ENCODE measurements at regions of chr12 and their contacts with region 1.

Region 1: DNA sequence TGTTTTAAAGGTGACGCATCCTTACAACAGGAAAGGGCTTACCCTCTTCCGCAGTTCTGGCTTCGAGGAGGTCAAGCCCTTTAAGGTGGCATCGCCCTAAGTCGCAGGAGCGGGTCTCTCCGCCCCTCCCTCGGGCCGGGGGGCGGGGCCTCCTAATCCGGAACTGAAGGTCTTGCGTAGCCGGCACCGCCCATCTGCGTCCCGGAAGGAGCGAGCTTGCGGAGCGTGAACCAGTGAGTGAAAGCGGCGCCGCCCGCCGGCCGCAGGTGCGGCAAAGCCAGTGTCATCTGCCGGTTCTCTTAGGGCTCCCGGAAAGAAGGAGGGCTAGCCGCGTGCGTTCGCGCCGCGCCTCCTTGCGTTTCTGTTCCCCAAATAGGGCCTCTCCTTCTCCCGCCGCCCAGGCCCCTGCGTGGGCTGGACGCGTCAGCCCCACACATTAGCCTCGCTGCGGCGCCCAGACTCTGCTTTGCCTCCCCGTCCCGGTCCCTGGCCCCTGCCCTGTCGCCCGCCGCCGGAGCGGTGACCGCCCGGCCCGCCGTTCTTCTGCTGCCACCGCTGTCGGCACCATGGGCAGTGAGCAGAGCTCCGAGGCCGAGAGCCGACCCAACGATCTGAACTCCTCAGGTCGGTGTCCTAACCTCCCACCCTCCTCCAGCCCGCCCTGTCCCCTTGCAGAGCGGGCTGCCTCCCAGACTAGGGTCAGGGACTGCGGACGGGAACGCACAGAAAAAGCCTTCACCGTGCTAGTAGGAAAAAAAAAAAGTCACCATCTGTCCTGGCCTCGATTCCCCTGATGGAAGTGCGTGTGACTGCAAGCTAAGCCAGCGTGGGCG is at the start of gene BORCS5:
- DNase-seq: peak; percentile 96 to 99 (median 98)
- ATAC-seq: peak; percentile 85
- H3K4me3 ChIP-seq: peak within 1 kb of the TSS; percentile 87
- H3K4me3 Mint-ChIP-seq: peak within 1 kb of the TSS; percentile 94
- H3K27ac ChIP-seq: peak within 1 kb of the TSS; percentile 86 to 93
- H3K27ac Mint-ChIP-seq: peak within 1 kb of the TSS; percentile 97
- H3K4me1 ChIP-seq: peaks cover 41% of the 10 kb centered on the region
- H3K4me1 Mint-ChIP-seq: peaks cover 64% of the 10 kb centered on the region
- H3K27me3 ChIP-seq: no peaks in the 10 kb centered on the region
- H3K27me3 Mint-ChIP-seq: no peaks in the 10 kb centered on the region
- CTCF ChIP-seq: peak; percentile 30
- total RNA-seq, gene BORCS5: 36.4 to 39.3 TPM

Region 2: DNA sequence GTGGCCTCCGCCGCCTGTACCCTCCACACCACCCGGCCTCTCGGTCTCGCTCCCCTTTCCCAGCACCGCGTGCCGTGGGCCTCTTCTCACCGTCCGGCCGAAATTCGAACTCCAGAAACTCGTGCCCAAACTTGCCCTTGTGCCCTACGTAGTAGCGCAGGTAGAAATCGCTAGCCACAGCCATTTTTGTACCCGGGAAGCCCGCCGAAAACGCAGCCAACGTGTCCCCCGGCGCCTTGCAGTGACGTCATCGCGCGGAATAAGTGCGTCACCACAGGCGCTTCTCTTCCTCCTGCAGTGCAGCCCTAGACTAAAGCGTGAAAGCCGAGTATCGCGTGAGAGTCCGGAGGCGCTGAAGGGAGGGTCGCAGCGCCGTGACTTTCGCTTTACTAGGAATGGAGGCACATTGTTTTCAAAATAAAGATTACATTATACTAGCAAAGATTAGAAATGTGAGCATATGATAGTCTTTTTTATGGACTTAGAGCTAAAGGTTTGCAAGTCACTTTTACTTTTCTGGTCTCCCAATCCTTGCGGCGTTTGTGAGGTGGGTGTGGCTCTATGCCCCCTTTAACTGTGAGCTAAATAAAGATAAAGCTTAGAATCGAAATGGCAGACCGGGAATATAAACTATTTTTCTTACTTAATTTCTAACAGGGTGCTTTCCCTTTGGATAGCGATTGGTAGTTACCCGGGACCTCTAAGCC is 1743.6 kb before region 1 on chr12 and contains the start of gene MAGOHB:
- CTCF ChIA-PET with region 1: no interaction called
- POLR2A ChIA-PET with region 1: interaction called, 3 read pairs
- intact Hi-C with region 1: loop called in 1 of 2 experiments (anchors 10 kb)
- DNase-seq: peak; percentile 95 to 100 (median 98)
- ATAC-seq: peak; percentile 91
- H3K4me3 ChIP-seq: peak within 1 kb of the TSS; percentile 94
- H3K4me3 Mint-ChIP-seq: peak within 1 kb of the TSS; percentile 99
- H3K27ac ChIP-seq: peak within 1 kb of the TSS; percentile 93 to 95
- H3K27ac Mint-ChIP-seq: peak within 1 kb of the TSS; percentile 99
- H3K4me1 ChIP-seq: peaks cover 11% of the 10 kb centered on the region
- H3K4me1 Mint-ChIP-seq: peaks cover 26% of the 10 kb centered on the region
- H3K27me3 ChIP-seq: no peaks in the 10 kb centered on the region
- H3K27me3 Mint-ChIP-seq: peaks cover 17% of the 10 kb centered on the region
- CTCF ChIP-seq: no peak
- total RNA-seq, gene MAGOHB: 7.5 to 7.7 TPM

Region 3: DNA sequence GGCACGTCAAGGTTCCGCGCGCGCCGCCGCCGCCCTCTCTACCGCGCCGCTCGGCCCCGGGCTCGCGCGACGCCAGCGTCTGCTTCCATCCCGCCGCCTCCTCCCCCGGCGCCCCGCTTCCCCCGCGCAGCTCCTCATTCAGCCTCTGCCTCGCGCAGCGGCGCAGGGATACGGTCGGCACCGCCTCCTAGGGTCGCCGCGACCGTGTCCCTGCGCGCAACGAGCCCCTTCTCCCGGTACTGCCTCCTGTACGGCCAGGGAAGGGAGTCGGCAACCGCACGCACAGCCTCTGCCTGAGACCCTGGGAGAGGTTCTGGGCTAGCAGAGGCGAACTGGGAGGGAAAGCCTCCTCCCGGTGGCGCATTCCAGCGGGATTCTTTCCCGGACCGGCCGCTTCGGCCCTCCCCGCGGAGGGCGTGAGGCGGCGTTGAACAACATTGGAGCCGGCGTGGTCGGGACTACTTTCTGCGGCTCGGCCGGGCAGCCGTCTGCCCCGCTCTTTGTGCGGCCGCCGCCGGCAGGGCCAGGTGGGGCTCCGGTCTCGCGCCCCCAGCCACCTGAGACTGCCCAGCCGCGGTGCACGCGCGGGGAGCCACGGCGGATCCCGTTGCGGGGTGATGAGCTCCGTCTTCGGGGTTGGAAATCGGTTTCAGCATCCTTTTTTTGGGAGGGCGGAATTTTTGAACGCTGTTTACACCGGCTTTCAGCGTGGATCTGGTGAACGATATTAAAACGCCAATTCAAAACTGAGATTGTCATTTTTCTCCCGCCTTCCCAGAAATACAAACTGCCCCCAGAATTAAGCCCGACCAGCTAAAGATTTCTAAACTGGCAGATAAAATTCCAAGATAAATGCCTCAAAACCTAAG is 90.0 kb before region 1 on chr12 and contains the start of gene LRP6:
- CTCF ChIA-PET with region 1: no interaction called
- POLR2A ChIA-PET with region 1: interaction called, 15 read pairs
- intact Hi-C with region 1: loop called in 1 of 2 experiments (anchors 5 kb)
- DNase-seq: peak; percentile 52 to 86 (median 70)
- ATAC-seq: peak; percentile 93
- H3K4me3 ChIP-seq: peak within 1 kb of the TSS; percentile 66
- H3K4me3 Mint-ChIP-seq: peak within 1 kb of the TSS; percentile 91
- H3K27ac ChIP-seq: no peak within 1 kb of the TSS
- H3K27ac Mint-ChIP-seq: peak within 1 kb of the TSS; percentile 18
- H3K4me1 ChIP-seq: peaks cover 16% of the 10 kb centered on the region
- H3K4me1 Mint-ChIP-seq: peaks cover 28% of the 10 kb centered on the region
- H3K27me3 ChIP-seq: peaks cover 0 to 14% of the 10 kb centered on the region in 2 experiments
- H3K27me3 Mint-ChIP-seq: peaks cover 6% of the 10 kb centered on the region
- CTCF ChIP-seq: no peak
- total RNA-seq, gene LRP6: 5.2 to 6.8 TPM

Region 4: GRCh38 chr12:12387501-12387900 is 30.4 kb after region 1 on chr12:
- CTCF ChIA-PET with region 1: no interaction called
- POLR2A ChIA-PET with region 1: no interaction called
- intact Hi-C with region 1: no loop called
- DNase-seq: peak in 3 of 14 experiments; percentile 27 to 39 (median 35)
- ATAC-seq: no peak
- H3K4me3 ChIP-seq: no peak overlapping the region
- H3K4me3 Mint-ChIP-seq: no peak overlapping the region
- H3K27ac ChIP-seq: no peak overlapping the region
- H3K27ac Mint-ChIP-seq: peak overlapping the region; percentile 62
- H3K4me1 ChIP-seq: peaks cover 10% of the 10 kb centered on the region
- H3K4me1 Mint-ChIP-seq: peaks cover 48% of the 10 kb centered on the region
- H3K27me3 ChIP-seq: no peaks in the 10 kb centered on the region
- H3K27me3 Mint-ChIP-seq: no peaks in the 10 kb centered on the region
- CTCF ChIP-seq: no peak

Region 5: DNA sequence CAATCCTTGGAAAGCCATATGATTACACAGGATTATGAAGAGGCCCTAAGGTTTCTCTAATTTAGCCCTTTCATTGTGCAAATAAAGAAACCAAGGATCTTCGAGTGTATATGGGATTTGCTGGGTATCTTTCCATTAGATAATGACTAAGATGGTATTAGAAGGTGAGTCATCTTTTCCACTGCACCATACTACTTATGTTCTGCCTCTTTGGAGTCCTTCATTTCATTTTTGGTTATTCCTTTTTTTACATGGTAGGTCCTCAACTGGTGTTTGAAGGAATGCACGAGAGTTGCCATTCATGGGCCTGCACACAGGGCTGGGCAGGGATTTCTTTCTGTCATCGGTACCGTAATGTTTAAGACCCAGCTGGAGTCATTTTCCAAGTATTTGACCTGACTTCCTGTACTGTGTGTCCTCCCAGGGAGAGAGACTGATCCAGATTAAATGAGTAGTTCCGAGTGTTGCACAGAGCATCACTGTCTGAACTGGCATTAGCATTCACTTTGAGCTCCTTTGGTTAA is 85.5 kb after region 1 on chr12:
- CTCF ChIA-PET with region 1: no interaction called
- POLR2A ChIA-PET with region 1: interaction called, 17 read pairs
- intact Hi-C with region 1: no loop called
- DNase-seq: peak in 3 of 14 experiments; percentile 47 to 52 (median 52)
- ATAC-seq: peak; percentile 1
- H3K4me3 ChIP-seq: no peak overlapping the region
- H3K4me3 Mint-ChIP-seq: peak overlapping the region; percentile 45
- H3K27ac ChIP-seq: peak overlapping the region; percentile 83
- H3K27ac Mint-ChIP-seq: peak overlapping the region; percentile 95
- H3K4me1 ChIP-seq: peaks cover 74% of the 10 kb centered on the region
- H3K4me1 Mint-ChIP-seq: peaks cover 81% of the 10 kb centered on the region
- H3K27me3 ChIP-seq: no peaks in the 10 kb centered on the region
- H3K27me3 Mint-ChIP-seq: no peaks in the 10 kb centered on the region
- CTCF ChIP-seq: no peak

Region 6: DNA sequence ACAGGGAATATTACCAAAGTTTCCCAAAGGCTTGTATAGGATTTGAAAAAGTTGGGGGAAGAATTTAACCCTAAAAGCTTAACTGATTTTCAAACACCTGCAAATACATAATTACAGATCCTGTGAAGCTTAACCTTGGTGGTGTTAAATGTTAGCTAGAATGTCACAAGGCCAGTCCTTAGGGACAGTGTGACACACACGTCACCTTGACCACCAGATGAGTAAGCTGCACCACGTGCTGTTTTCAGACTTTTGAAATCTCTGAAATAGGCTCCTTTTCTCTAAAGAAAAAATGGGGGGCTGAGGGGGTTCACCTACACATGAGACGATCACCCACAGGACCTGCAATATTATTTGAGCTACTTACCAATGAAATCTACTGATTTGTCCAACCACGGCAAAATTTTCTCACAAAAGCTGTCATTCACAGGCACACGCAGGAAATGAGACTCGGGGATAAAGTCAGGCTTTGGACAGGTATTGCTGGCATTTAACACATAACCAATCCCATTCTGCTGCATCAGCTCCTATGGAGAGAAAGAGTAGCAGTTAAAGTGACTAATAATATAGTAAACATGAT is 129.6 kb after region 1 on chr12:
- CTCF ChIA-PET with region 1: no interaction called
- POLR2A ChIA-PET with region 1: interaction called, 36 read pairs
- intact Hi-C with region 1: no loop called
- DNase-seq: no peak
- ATAC-seq: no peak
- H3K4me3 ChIP-seq: no peak overlapping the region
- H3K4me3 Mint-ChIP-seq: no peak overlapping the region
- H3K27ac ChIP-seq: peak overlapping the region in 1 of 2 donors; percentile 56
- H3K27ac Mint-ChIP-seq: peak overlapping the region; percentile 73
- H3K4me1 ChIP-seq: peaks cover 37% of the 10 kb centered on the region
- H3K4me1 Mint-ChIP-seq: peaks cover 51% of the 10 kb centered on the region
- H3K27me3 ChIP-seq: no peaks in the 10 kb centered on the region
- H3K27me3 Mint-ChIP-seq: no peaks in the 10 kb centered on the region
- CTCF ChIP-seq: no peak

Region 7: DNA sequence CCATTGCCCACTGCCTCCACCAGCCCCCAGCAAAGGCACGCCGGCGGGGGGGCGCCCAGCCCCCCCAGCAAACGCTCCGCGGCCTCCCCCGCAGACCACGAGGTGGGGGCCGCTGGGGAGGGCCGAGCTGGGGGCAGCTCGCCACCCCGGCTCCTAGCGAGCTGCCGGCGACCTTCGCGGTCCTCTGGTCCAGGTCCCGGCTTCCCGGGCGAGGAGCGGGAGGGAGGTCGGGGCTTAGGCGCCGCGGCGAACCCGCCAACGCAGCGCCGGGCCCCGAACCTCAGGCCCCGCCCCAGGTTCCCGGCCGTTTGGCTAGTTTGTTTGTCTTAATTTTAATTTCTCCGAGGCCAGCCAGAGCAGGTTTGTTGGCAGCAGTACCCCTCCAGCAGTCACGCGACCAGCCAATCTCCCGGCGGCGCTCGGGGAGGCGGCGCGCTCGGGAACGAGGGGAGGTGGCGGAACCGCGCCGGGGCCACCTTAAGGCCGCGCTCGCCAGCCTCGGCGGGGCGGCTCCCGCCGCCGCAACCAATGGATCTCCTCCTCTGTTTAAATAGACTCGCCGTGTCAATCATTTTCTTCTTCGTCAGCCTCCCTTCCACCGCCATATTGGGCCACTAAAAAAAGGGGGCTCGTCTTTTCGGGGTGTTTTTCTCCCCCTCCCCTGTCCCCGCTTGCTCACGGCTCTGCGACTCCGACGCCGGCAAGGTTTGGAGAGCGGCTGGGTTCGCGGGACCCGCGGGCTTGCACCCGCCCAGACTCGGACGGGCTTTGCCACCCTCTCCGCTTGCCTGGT is 359.9 kb after region 1 on chr12 and contains the start of gene CDKN1B:
- CTCF ChIA-PET with region 1: interaction called, 8 read pairs
- POLR2A ChIA-PET with region 1: interaction called, 175 read pairs
- intact Hi-C with region 1: no loop called
- DNase-seq: peak; percentile 75 to 95 (median 84)
- ATAC-seq: peak; percentile 56
- H3K4me3 ChIP-seq: peak within 1 kb of the TSS; percentile 97
- H3K4me3 Mint-ChIP-seq: peak within 1 kb of the TSS; percentile 99
- H3K27ac ChIP-seq: peak within 1 kb of the TSS; percentile 88 to 97
- H3K27ac Mint-ChIP-seq: peak within 1 kb of the TSS; percentile 95
- H3K4me1 ChIP-seq: peaks cover 38% of the 10 kb centered on the region
- H3K4me1 Mint-ChIP-seq: peaks cover 69% of the 10 kb centered on the region
- H3K27me3 ChIP-seq: no peaks in the 10 kb centered on the region
- H3K27me3 Mint-ChIP-seq: no peaks in the 10 kb centered on the region
- CTCF ChIP-seq: no peak
- total RNA-seq, gene CDKN1B: 352 TPM

Region 8: GRCh38 chr12:12813120-12814101 is 456.3 kb after region 1 on chr12 and contains the start of gene DDX47:
- CTCF ChIA-PET with region 1: no interaction called
- POLR2A ChIA-PET with region 1: interaction called, 9 read pairs
- intact Hi-C with region 1: loop called in 1 of 2 experiments (anchors 5 kb)
- DNase-seq: peak; percentile 94 to 99 (median 97)
- ATAC-seq: peak; percentile 83
- H3K4me3 ChIP-seq: peak within 1 kb of the TSS; percentile 95
- H3K4me3 Mint-ChIP-seq: peak within 1 kb of the TSS; percentile 94
- H3K27ac ChIP-seq: peak within 1 kb of the TSS; percentile 74 to 88
- H3K27ac Mint-ChIP-seq: peak within 1 kb of the TSS; percentile 91
- H3K4me1 ChIP-seq: peaks cover 42% of the 10 kb centered on the region
- H3K4me1 Mint-ChIP-seq: peaks cover 65% of the 10 kb centered on the region
- H3K27me3 ChIP-seq: no peaks in the 10 kb centered on the region
- H3K27me3 Mint-ChIP-seq: no peaks in the 10 kb centered on the region
- CTCF ChIP-seq: peak; percentile 96
- total RNA-seq, gene DDX47: 153 TPM